ENCODE measurements at regions of chr1 and their contacts with region 1.

Region 1: GRCh38 chr1:182884872-182885271 is 45.7 kb downstream of the DHX9 start:
- DNase-seq: no peak
- H3K4me3 ChIP-seq: no peak overlapping the region
- H3K27ac ChIP-seq: no peak overlapping the region
- H3K4me1 ChIP-seq: no peaks in the 10 kb centered on the region
- CTCF ChIP-seq: no peak

Region 2: DNA sequence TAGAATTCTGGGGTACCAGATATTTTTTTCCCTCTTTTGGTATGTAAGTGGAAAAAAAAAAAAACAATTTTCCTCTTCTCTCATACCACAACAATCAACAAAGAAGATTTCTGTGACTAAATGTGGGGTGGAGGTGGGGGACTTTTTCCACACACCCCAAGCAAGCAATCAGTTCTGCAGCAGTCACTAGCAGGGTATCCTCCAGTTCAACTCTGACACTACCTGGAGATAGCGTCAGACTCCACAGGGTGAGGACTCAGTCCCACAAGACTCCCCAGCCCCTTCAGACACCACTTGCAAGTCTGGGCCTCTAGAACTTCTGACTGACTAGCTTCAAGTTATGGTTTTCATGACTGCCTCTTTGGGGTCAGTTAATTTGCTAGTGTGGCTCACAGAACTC is 39.5 kb before region 1 on chr1:
- CTCF ChIA-PET with region 1: no interaction called
- POLR2A ChIA-PET with region 1: no interaction called
- intact Hi-C with region 1: loop called (anchors 5 kb)
- DNase-seq: no peak
- H3K4me3 ChIP-seq: no peak overlapping the region
- H3K27ac ChIP-seq: no peak overlapping the region
- H3K4me1 ChIP-seq: peaks cover 23% of the 10 kb centered on the region
- CTCF ChIP-seq: no peak

Region 3: GRCh38 chr1:182869241-182869666 is 15.6 kb before region 1 on chr1:
- CTCF ChIA-PET with region 1: no interaction called
- POLR2A ChIA-PET with region 1: interaction called, 5 read pairs
- intact Hi-C with region 1: loop called (anchors 2 kb)
- DNase-seq: no peak
- H3K4me3 ChIP-seq: no peak overlapping the region
- H3K27ac ChIP-seq: no peak overlapping the region
- H3K4me1 ChIP-seq: no peaks in the 10 kb centered on the region
- CTCF ChIP-seq: no peak

Measured in OCI-LY7 (cell line).